Endothelial cell of umbilical vein (primary cell): ENCODE measurements at regions of chr11 and their contacts with region 1.

Region 1: GRCh38 chr11:36411202-36411640 is 98.9 kb downstream of the TRAF6 start:
- DNase-seq: peak; percentile 44
- H3K4me3 ChIP-seq: no peak overlapping the region
- H3K27ac ChIP-seq: peak overlapping the region; percentile 26
- H3K4me1 ChIP-seq: peaks cover 30% of the 10 kb centered on the region
- H3K27me3 ChIP-seq: no peaks in the 10 kb centered on the region
- CTCF ChIP-seq: no peak
- POLR2A ChIP-seq: no peak

Region 2: DNA sequence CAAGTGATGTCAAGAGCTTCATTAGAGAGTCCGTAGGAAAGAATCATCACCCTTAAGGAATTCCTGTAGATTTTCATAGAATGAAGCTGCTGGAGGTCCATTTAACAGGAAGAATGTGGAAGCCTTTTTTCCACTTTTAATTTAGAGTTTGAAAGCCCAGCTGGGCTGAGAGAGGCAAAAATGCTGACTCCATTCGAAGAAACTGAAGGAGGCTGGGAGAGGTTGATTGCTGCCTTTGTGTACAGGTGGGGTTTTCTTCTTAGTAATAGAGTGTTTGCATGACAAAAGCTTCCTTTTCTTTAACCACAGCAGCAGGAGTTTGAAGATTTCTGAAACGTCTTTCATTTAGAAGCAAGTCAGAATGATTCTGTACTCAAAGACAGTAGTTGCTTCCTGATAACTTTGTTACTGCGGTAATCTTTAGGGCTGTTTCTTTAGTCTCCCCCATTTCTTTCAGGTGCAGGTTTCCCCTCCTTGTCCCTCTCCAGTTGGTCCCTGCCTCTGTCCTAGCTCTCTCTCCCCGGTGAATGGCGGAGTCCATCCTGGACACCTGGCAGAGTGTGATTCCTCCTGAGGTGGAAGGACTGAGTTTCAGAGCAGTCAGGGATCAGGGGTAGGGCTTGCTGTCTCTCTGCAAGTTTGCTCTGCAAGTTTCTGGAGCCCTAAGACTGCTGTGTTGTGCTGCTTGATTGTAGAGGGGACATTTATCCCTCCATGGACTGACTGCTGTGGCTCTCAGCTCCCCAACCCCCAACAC is 301.2 kb before region 1 on chr11:
- CTCF ChIA-PET with region 1: no interaction called
- POLR2A ChIA-PET with region 1: no interaction called
- dilution Hi-C with region 1: no loop called
- intact Hi-C with region 1: no loop called
- DNase-seq: no peak
- H3K4me3 ChIP-seq: no peak overlapping the region
- H3K27ac ChIP-seq: no peak overlapping the region
- H3K4me1 ChIP-seq: peaks cover 5% of the 10 kb centered on the region
- H3K27me3 ChIP-seq: no peaks in the 10 kb centered on the region
- CTCF ChIP-seq: no peak
- POLR2A ChIP-seq: no peak

Region 3: GRCh38 chr11:36421546-36422155 is 10.4 kb after region 1 on chr11:
- CTCF ChIA-PET with region 1: interaction called, 14 read pairs
- POLR2A ChIA-PET with region 1: no interaction called
- dilution Hi-C with region 1: no loop called
- intact Hi-C with region 1: no loop called
- DNase-seq: no peak
- H3K4me3 ChIP-seq: no peak overlapping the region
- H3K27ac ChIP-seq: no peak overlapping the region
- H3K4me1 ChIP-seq: peaks cover 7% of the 10 kb centered on the region
- H3K27me3 ChIP-seq: no peaks in the 10 kb centered on the region
- CTCF ChIP-seq: no peak
- POLR2A ChIP-seq: no peak

Region 4: DNA sequence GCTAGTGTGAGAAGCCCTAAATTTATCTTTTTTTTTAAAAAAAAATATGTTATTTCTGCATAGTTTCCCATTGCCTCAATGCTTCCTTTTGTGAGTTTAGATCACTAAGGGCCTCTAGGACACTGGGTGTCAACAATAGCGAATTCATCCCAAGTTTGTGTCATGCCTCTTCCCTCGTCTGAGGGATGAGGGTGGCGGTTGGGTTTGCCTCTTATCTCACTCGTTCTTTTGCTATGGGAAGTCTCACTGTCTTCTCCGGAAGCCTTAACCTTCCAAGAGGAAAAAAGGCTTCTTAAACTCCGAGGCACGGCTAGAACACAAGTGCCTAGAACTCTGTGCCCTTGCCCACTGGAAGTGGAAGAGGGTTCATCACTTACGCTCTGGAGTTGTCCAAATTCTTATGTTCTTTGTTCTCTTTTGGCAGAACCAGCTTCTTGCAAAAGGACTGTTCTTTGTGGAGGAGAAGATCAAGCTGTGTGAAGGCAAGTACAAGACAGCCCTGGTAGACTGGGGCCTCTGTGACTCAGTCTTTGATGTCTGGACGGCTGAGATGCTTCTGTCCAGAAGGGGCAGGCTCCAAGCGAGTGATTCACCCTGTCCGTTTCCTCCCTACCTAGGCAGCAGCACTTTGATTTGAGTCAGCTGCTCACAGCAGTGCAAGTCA is 20.3 kb after region 1 on chr11:
- CTCF ChIA-PET with region 1: interaction called, 3 read pairs
- POLR2A ChIA-PET with region 1: no interaction called
- dilution Hi-C with region 1: no loop called
- intact Hi-C with region 1: loop called (anchors 2 kb)
- DNase-seq: peak; percentile 78
- H3K4me3 ChIP-seq: no peak overlapping the region
- H3K27ac ChIP-seq: peak overlapping the region; percentile 43
- H3K4me1 ChIP-seq: peaks cover 11% of the 10 kb centered on the region
- H3K27me3 ChIP-seq: no peaks in the 10 kb centered on the region
- CTCF ChIP-seq: peak in 1 of 2 donors; percentile 8
- POLR2A ChIP-seq: no peak